ENCODE measurements at regions of chr4 and their contacts with region 1.

Region 1: GRCh38 chr4:76179398-76180318 is 31.5 kb upstream of the NUP54 start:
- DNase-seq: peak; percentile 66
- H3K4me3 ChIP-seq: no peak overlapping the region
- H3K27ac ChIP-seq: no peak overlapping the region
- H3K27me3 ChIP-seq: no peaks in the 10 kb centered on the region
- CTCF ChIP-seq: peak; percentile 96

Region 2: GRCh38 chr4:75950213-75950815 is 229.3 kb before region 1 on chr4:
- CTCF ChIA-PET with region 1: no interaction called
- POLR2A ChIA-PET with region 1: no interaction called
- DNase-seq: no peak
- H3K4me3 ChIP-seq: no peak overlapping the region
- H3K27ac ChIP-seq: no peak overlapping the region
- H3K27me3 ChIP-seq: no peaks in the 10 kb centered on the region
- CTCF ChIP-seq: no peak

Region 3: GRCh38 chr4:75995727-75996126 is 183.9 kb before region 1 on chr4:
- CTCF ChIA-PET with region 1: interaction called, 10 read pairs
- POLR2A ChIA-PET with region 1: no interaction called
- DNase-seq: no peak
- H3K4me3 ChIP-seq: no peak overlapping the region
- H3K27ac ChIP-seq: no peak overlapping the region
- H3K27me3 ChIP-seq: no peaks in the 10 kb centered on the region
- CTCF ChIP-seq: peak; percentile 63

Region 4: DNA sequence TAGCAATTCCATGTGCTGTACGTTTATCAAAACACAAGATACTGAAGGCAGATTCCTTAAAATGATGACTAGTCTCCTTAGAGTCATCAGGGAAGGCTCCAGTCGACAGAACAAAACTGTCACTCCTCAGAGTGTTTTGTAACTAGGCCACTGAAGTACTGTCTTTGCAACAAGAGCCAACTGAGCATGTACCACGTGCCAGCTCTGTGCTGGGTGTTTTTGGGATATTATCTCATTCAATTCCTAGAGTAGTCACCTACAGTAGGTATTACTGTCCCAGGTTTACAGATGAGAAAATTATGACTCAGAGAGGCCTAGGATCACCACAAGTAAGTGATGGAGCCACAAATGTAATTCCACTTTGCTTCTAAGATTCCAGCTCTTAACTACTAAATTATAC is 13.2 kb before region 1 on chr4:
- CTCF ChIA-PET with region 1: interaction called, 65 read pairs
- POLR2A ChIA-PET with region 1: no interaction called
- DNase-seq: no peak
- H3K4me3 ChIP-seq: no peak overlapping the region
- H3K27ac ChIP-seq: no peak overlapping the region
- H3K27me3 ChIP-seq: no peaks in the 10 kb centered on the region
- CTCF ChIP-seq: no peak

Region 5: GRCh38 chr4:76206222-76206942 is 26.7 kb after region 1 on chr4:
- CTCF ChIA-PET with region 1: interaction called, 55 read pairs
- POLR2A ChIA-PET with region 1: no interaction called
- DNase-seq: no peak
- H3K4me3 ChIP-seq: no peak overlapping the region
- H3K27ac ChIP-seq: peak overlapping the region; percentile 25
- H3K27me3 ChIP-seq: no peaks in the 10 kb centered on the region
- CTCF ChIP-seq: no peak

Region 6: DNA sequence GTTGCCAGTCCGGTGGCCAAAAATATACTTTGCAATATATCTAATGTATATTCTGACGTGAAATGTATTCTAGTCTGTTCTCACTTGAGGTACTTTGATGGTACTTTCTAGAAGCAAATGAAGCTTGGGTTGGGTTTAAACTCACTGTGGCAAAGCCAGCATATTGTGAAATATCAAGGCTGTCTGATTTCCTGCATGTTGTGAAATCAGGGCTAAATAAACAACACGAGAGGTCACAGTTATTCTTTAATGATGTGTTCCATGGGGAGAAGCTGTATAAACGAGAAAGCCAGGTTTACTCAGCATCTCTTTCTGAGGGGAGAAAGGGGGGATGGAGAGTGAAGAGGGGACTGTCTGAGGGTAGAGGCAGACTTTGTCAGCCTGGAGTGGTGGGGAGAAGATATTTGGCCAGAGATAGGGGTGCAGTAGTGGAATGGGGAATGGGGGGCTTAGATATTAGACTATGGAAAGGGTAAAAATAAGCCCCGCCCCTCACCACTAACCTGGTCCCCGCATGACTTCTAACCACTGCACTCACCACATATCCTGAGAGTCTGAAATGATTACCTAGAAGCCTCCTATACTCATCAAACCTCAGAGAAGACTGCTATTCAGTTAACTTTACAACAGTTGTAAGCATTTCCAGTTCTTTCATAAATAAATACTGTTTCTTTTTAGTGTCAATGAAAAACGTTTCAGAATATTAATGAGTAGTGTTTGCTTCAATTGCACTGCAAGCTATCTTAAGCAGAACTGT is 39.8 kb after region 1 on chr4:
- CTCF ChIA-PET with region 1: interaction called, 18 read pairs
- POLR2A ChIA-PET with region 1: no interaction called
- DNase-seq: no peak
- H3K4me3 ChIP-seq: no peak overlapping the region
- H3K27ac ChIP-seq: no peak overlapping the region
- H3K27me3 ChIP-seq: peaks cover 3% of the 10 kb centered on the region
- CTCF ChIP-seq: no peak

Region 7: GRCh38 chr4:76305971-76306881 is 126.6 kb after region 1 on chr4 and contains the start of gene STBD1:
- CTCF ChIA-PET with region 1: interaction called, 63 read pairs
- POLR2A ChIA-PET with region 1: interaction called, 3 read pairs
- DNase-seq: peak; percentile 15
- H3K4me3 ChIP-seq: peak within 1 kb of the TSS; percentile 77
- H3K27ac ChIP-seq: peak within 1 kb of the TSS; percentile 47
- H3K27me3 ChIP-seq: no peaks in the 10 kb centered on the region
- CTCF ChIP-seq: no peak
- polyA plus RNA-seq, gene STBD1: 0.69 and 0.92 TPM in 2 replicates

Region 8: GRCh38 chr4:76499461-76499860 is 319.8 kb after region 1 on chr4:
- CTCF ChIA-PET with region 1: interaction called, 40 read pairs
- POLR2A ChIA-PET with region 1: no interaction called
- DNase-seq: no peak
- H3K4me3 ChIP-seq: no peak overlapping the region
- H3K27ac ChIP-seq: no peak overlapping the region
- H3K27me3 ChIP-seq: peaks cover 20% of the 10 kb centered on the region
- CTCF ChIP-seq: no peak

Measured in AG04450 (cell line).